ENCODE measurements at regions of chr4 and their contacts with region 1.

Region 1: DNA sequence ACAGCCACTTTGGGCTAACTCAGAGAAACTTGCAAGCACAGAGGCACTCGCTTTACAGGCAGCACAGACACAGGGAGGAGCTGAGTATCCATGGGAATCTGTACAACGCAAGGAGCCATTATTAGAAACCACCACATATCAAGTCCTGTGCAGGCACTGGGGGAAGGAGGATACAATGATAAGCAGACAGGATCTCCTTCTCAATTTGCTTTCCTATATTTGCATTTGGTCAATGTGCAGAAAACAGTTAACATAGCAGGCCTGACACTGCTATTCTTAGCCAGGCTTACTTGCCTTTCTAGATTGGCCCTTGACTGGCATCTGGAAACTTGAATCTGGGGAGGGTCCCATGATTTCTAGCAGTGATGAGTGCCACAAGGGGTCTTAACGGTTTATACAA is 65.8 kb downstream of the TEC start:
- DNase-seq: peak; percentile 55 to 93 (median 72)
- ATAC-seq: peak; percentile 92
- H3K4me3 ChIP-seq: no peak overlapping the region
- H3K27ac ChIP-seq: peak overlapping the region; percentile 61
- H3K4me1 ChIP-seq: peaks cover 31 to 57% of the 10 kb centered on the region in 2 experiments
- H3K27me3 ChIP-seq: no peaks in the 10 kb centered on the region
- CTCF ChIP-seq: peak in 2 of 3 experiments; percentile 10 to 36; a peak in 2 of 6 replicates
- EP300 ChIP-seq: peak; percentile 98
- POLR2A ChIP-seq: no peak
- RAD21 ChIP-seq: peak; percentile 36 to 60

Region 2: DNA sequence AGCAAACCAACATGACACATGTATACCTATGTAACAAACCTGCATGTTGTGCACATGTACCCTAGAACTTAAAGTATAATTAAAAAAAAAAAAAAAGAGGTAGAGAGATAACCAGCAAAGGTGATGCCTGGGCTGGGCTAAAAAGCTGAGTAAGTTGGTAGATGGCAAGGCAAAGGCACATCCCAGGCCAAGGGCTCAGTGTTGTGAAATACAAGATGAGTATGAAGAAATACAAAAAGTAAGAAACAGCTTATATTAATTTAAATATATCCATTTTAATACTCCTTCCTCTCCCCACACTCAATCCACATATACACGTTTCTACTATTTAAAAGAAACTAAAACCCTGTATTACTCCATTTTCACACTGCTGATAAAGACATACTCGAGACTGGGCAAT is 40.1 kb after region 1 on chr4:
- CTCF ChIA-PET with region 1: no interaction called
- POLR2A ChIA-PET with region 1: interaction called, 3 read pairs
- in situ Hi-C with region 1: no loop called
- intact Hi-C with region 1: loop called (anchors 2 kb)
- DNase-seq: no peak
- ATAC-seq: no peak; the same call in 2 of the 3 replicates
- H3K4me3 ChIP-seq: no peak overlapping the region
- H3K27ac ChIP-seq: peak overlapping the region; percentile 35
- H3K4me1 ChIP-seq: peaks cover 10 to 56% of the 10 kb centered on the region in 2 experiments
- H3K27me3 ChIP-seq: no peaks in the 10 kb centered on the region
- CTCF ChIP-seq: no peak
- EP300 ChIP-seq: no peak
- POLR2A ChIP-seq: no peak
- RAD21 ChIP-seq: no peak

Region 3: DNA sequence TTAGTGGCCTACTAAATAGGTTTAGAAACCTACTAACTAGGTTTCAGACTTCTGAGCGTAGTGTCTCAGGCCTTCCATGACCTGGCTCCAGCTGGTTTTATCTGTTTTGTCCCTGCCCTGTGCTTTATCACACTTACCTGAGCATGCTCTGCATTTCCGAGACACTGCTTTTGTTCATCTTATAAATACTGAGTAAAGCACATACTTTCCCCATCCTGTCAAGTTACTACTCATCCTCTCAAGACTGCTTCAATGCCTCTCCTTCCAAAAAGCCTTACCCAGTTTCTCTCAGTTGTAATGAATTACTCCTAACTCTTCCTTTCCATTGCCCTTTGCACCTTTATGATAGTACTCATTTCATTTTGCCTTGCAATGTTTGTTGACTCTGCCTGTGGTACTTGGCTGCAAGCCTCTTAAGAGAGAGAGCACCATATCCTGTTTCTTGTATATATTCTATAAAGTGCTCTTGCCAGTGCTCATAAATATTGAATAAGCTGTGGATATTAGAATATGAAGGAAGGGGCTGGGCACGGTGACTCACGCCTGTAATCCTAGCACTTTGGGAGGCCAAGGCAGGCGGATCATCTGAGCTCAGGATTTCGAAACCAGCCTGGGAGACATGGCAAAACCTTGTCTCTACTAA is 172.0 kb after region 1 on chr4:
- CTCF ChIA-PET with region 1: no interaction called
- POLR2A ChIA-PET with region 1: no interaction called
- in situ Hi-C with region 1: no loop called
- intact Hi-C with region 1: no loop called
- DNase-seq: no peak
- ATAC-seq: no peak
- H3K4me3 ChIP-seq: no peak overlapping the region
- H3K27ac ChIP-seq: no peak overlapping the region
- H3K4me1 ChIP-seq: no peaks in the 10 kb centered on the region; a peak in 1 of 5 replicates
- H3K27me3 ChIP-seq: no peaks in the 10 kb centered on the region
- CTCF ChIP-seq: no peak
- EP300 ChIP-seq: no peak
- POLR2A ChIP-seq: no peak
- RAD21 ChIP-seq: no peak